Sigmoid colon (tissue), 7 donors: ENCODE measurements at regions of chr10 and their contacts with region 1.

Region 1: GRCh38 chr10:110304780-110305421 is at the start of gene SMNDC1:
- DNase-seq: peak; percentile 99
- H3K4me3 ChIP-seq: peak within 1 kb of the TSS; percentile 79 to 97 (median 94)
- H3K27ac ChIP-seq: peak within 1 kb of the TSS; percentile 94 to 97 (median 96)
- H3K4me1 ChIP-seq: peaks cover 0 to 47% (median 39%) of the 10 kb centered on the region in 4 donors
- H3K27me3 ChIP-seq: no peaks in the 10 kb centered on the region
- CTCF ChIP-seq: no peak
- EP300 ChIP-seq: peak in 1 of 4 donors; percentile 45
- POLR2A ChIP-seq: peak; percentile 65 to 78
- total RNA-seq, gene SMNDC1: 13.3 to 19.7 (median 14.7) TPM

Region 2: DNA sequence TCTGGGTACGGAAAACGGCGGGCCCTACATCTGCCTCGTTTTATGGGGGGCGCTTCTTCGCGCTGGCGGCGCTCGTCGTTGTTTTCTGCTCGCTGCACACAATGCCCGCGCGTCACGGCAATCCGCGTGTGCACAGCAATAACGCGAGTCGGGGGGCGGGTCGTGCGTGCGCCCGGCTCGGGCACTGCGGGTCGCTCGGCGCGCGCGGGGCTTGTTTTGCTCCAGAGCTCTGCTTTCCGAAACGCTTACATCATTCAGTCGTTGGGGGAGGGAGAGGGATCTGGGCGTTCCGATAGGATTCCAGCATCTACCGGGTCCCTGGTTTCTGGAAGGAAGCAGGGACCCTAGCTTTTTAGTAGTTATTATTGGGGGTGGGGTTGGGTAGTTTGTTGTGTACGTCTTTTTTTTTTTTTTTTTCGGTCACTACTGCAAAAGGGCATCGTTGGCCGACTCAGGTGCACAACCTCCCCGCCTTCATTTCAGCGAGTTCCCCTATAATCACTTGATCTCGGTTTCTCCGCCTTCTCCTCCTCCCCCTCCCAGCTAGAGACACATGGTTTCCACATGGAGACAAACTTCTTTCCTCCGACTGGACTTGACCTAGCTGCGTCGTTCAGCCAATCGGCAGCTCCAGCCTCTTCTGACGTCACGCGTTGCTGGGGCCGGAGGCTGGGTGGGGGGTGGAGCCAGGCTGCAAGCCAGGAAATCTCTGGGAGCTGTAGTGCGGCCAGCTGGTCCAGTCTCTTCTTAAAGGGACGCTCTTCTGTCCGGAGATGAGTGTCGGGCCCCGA is 94.0 kb before region 1 on chr10:
- intact Hi-C with region 1: no loop called
- DNase-seq: peak; percentile 99
- H3K4me3 ChIP-seq: peak overlapping the region; percentile 62 to 92 (median 76)
- H3K27ac ChIP-seq: peak overlapping the region; percentile 94 to 100 (median 98)
- H3K4me1 ChIP-seq: peaks cover 0 to 45% (median 35%) of the 10 kb centered on the region in 4 donors
- H3K27me3 ChIP-seq: no peaks in the 10 kb centered on the region
- CTCF ChIP-seq: no peak
- EP300 ChIP-seq: peak in 2 of 4 donors; percentile 39 to 75
- POLR2A ChIP-seq: peak; percentile 73 to 85

Region 3: GRCh38 chr10:110502851-110503301 is 198.0 kb after region 1 on chr10:
- intact Hi-C with region 1: loop called (anchors 1 kb)
- DNase-seq: peak; percentile 91
- H3K4me3 ChIP-seq: no peak overlapping the region
- H3K27ac ChIP-seq: peak overlapping the region; percentile 73 to 98 (median 97)
- H3K4me1 ChIP-seq: peaks cover 0 to 84% (median 70%) of the 10 kb centered on the region in 4 donors
- H3K27me3 ChIP-seq: no peaks in the 10 kb centered on the region
- CTCF ChIP-seq: no peak
- EP300 ChIP-seq: peak in 1 of 4 donors; percentile 65
- POLR2A ChIP-seq: no peak

Region 4: GRCh38 chr10:110547139-110547761 is 242.3 kb after region 1 on chr10:
- intact Hi-C with region 1: loop called (anchors 1 kb)
- DNase-seq: no peak
- H3K4me3 ChIP-seq: no peak overlapping the region
- H3K27ac ChIP-seq: no peak overlapping the region
- H3K4me1 ChIP-seq: peaks cover 0 to 4% (median 0%) of the 10 kb centered on the region in 4 donors
- H3K27me3 ChIP-seq: no peaks in the 10 kb centered on the region
- CTCF ChIP-seq: peak; percentile 63 to 77 (median 70)
- EP300 ChIP-seq: no peak
- POLR2A ChIP-seq: no peak

Region 5: GRCh38 chr10:110567201-110568054 is 262.5 kb after region 1 on chr10 and contains the start of gene SMC3:
- intact Hi-C with region 1: loop called (anchors 1 kb)
- DNase-seq: peak; percentile 95
- H3K4me3 ChIP-seq: peak within 1 kb of the TSS; percentile 68 to 99 (median 94)
- H3K27ac ChIP-seq: peak within 1 kb of the TSS; percentile 90 to 98 (median 92)
- H3K4me1 ChIP-seq: peaks cover 0 to 46% (median 42%) of the 10 kb centered on the region in 4 donors
- H3K27me3 ChIP-seq: peaks cover 0 to 5% (median 0%) of the 10 kb centered on the region in 3 donors
- CTCF ChIP-seq: no peak
- EP300 ChIP-seq: peak in 1 of 4 donors; percentile 13
- POLR2A ChIP-seq: peak; percentile 44 to 51
- total RNA-seq, gene SMC3: 27.2 to 43.5 (median 34.8) TPM